RWPE1 (cell line): ENCODE measurements at regions of chr21 and their contacts with region 1.

Region 1: DNA sequence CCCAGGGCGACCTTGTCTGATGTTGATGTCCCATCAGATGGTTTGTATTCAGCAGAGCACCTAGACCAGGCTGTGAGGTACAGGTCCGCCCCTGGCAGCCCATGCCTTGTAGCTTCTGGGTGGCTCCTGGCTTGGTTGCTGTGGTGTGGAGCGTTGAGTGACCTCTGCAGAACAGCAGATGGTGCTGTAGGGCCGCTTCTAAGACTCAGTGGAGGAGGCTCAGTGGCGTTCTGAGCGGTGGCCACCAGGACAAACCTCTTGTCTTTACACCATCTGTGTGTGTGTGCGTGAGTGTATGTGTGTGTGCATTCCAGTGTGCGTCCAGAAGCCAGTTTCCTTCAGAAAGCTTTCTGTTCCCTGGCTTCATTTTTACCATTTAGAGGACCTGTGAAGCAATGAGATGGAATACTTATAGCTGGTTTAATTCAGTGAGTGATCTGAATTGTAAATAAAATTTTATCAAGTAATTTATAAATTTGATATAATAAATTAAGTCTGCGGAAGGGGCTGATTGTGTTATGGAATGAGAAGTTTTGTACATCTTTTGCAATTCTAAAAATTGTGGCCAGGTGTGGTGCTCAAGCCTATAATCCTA is 66.1 kb downstream of the ADARB1 start:
- DNase-seq: peak; percentile 78
- H3K27ac ChIP-seq: no peak overlapping the region
- CTCF ChIP-seq: peak; percentile 85

Region 2: DNA sequence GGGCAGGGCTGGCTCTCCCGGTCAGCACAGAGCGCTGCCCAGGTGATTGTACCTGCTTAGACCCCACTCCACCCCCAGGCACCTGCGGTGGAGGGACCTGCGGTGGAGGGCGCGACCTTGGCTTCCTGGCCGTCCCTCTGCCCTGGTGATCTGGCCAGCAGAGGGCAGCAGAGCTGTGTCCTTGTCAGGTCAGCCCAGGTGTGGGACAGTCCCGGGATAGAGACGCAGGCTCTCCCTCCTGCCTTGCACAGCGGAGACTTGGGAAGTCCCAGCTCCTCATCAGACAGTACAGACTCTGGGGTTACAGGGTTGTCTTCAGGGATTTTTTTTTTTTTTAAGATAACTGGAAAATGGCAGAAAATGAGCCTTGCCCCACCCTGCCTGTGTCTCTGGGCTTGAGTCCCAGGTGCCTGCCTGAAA is 190.7 kb before region 1 on chr21:
- CTCF ChIA-PET with region 1: interaction called, 57 read pairs
- POLR2A ChIA-PET with region 1: no interaction called
- DNase-seq: peak; percentile 79
- H3K27ac ChIP-seq: peak overlapping the region; percentile 52
- CTCF ChIP-seq: peak; percentile 92

Region 3: DNA sequence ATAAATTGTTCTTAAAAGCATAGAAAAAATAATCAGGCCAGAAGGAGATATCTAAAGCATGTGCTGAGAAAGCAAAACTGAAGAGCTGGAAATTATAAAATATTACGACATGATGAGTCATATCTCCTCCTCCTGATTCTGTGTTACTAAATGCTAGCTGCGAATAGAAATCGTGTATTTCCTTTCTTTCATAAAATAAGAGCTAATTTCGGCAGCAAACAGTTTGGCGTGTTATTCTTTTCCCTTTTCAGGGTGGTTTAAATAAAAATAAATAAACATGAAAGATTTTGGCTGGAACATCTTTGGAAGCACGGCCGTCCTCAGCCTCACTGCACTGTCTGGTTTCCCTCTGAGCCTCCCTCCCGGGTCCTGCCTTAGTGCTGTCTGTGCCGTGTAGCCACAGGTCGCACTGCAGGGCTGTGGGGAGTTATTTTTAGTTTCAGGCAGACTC is 10.1 kb before region 1 on chr21:
- CTCF ChIA-PET with region 1: interaction called, 30 read pairs
- POLR2A ChIA-PET with region 1: no interaction called
- DNase-seq: peak; percentile 72
- H3K27ac ChIP-seq: peak overlapping the region; percentile 85
- CTCF ChIP-seq: no peak

Region 4: DNA sequence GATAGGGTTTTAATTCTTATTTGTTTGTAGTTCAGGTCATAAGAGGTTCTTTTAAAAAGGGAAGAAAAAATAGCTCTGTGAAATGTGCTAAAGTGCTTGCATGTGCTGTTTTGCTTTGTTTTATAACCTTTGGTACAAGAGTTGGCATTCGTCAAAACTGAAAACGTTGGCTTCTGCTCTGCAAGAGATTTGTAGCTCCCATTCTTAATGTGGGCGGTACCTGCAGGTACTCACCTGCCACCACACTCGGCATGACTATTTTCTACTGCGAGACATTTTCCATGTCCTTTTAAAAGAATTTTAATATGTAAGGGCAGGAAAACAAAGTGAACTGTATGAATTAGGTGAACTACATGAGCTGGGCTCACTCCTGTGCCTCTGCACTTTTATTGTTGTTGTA is 26.5 kb after region 1 on chr21:
- CTCF ChIA-PET with region 1: interaction called, 11 read pairs
- POLR2A ChIA-PET with region 1: no interaction called
- DNase-seq: no peak
- H3K27ac ChIP-seq: no peak overlapping the region
- CTCF ChIP-seq: no peak

Region 5: GRCh38 chr21:45287438-45288391 is 147.3 kb after region 1 on chr21 and contains the start of gene POFUT2:
- CTCF ChIA-PET with region 1: interaction called, 10 read pairs
- POLR2A ChIA-PET with region 1: interaction called, 3 read pairs
- DNase-seq: peak; percentile 98
- H3K27ac ChIP-seq: peak within 1 kb of the TSS; percentile 55
- CTCF ChIP-seq: no peak